ENCODE measurements at regions of chr2 and their contacts with region 1.

Region 1: GRCh38 chr2:60954139-60954538 is 63.4 kb upstream of the PEX13 start:
- DNase-seq: no peak
- CTCF ChIP-seq: no peak

Region 2: GRCh38 chr2:60939622-60940021 is 14.5 kb before region 1 on chr2:
- CTCF ChIA-PET with region 1: interaction called, 19 read pairs
- POLR2A ChIA-PET with region 1: no interaction called
- DNase-seq: no peak
- CTCF ChIP-seq: no peak

Region 3: DNA sequence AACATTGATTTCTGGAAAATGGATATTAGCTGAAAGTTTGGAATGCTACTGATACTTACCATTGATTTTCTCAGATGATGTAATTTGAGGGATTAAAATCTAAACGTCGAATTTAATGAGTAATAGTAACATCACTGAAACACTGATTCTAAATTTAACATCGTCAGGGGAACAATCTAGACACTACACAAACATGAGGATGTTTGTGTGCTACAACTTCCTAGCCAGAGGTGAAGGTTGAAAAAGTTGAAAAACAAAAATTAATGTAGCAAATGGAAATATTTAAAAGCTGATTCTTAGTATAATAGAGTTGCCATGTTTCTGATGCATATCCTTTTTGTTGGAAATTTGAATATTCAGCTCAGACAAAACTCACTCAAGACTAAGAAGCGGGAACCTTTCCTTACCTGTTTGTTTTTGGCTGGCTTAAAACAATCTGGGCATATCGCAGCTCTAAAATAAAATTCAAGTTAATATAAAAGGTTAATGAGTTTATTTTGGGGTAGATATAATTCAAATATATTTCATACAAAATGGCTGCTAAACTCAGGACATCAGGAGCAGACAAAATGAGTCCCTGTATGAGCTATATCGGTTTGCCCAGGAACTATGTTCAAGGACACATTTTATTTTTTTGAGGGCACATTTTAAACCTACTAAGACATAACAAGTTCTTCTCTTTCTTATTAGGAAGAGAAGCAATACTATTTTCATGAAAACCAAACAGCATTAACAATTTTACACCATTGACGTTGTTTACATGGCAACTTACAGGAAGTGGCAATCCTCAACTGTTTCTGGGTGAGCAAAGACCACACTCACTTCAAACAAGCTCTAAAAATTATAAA is 10.7 kb after region 1 on chr2:
- CTCF ChIA-PET with region 1: interaction called, 14 read pairs
- POLR2A ChIA-PET with region 1: no interaction called
- DNase-seq: no peak
- CTCF ChIP-seq: no peak